Panc1 (cell line): ENCODE measurements at regions of chr14 and their contacts with region 1.

Region 1: DNA sequence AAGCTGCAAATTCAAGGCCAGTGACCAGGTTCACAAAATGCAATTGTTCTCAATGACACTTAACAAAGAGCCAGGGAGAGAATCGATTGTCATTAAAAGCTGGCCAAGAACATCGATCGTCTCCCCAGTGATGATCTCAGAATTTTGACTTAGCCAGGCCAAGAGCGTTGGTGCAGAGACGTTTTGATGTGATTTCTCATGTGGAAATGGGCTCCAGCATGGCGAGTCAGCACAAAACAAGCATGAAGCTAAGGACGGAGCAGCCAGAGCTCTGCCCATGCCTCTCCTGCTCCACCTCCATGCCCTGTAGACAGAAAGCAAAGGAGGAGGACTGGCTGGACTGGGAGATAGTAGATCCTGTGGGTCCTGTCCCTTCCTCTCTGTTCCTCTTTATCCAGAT is 270.8 kb downstream of the FOXN3 start:
- DNase-seq: no peak
- ATAC-seq: no peak
- H3K4me3 ChIP-seq: no peak overlapping the region
- H3K27ac ChIP-seq: no peak overlapping the region
- H3K4me1 ChIP-seq: no peaks in the 10 kb centered on the region
- H3K27me3 ChIP-seq: no peaks in the 10 kb centered on the region
- CTCF ChIP-seq: no peak

Region 2: GRCh38 chr14:89589400-89590118 is 443.3 kb after region 1 on chr14:
- CTCF ChIA-PET with region 1: interaction called, 10 read pairs
- POLR2A ChIA-PET with region 1: no interaction called
- in situ Hi-C with region 1: no loop called
- intact Hi-C with region 1: no loop called
- DNase-seq: no peak
- ATAC-seq: no peak
- H3K4me3 ChIP-seq: no peak overlapping the region
- H3K27ac ChIP-seq: no peak overlapping the region
- H3K4me1 ChIP-seq: no peaks in the 10 kb centered on the region
- H3K27me3 ChIP-seq: no peaks in the 10 kb centered on the region
- CTCF ChIP-seq: no peak